ENCODE measurements at regions of chr16 and their contacts with region 1.

Region 1: GRCh38 chr16:56702836-56703235 is 20.6 kb downstream of the MT1X start:
- DNase-seq: no peak
- H3K4me3 Mint-ChIP-seq: no peak overlapping the region
- H3K27ac Mint-ChIP-seq: no peak overlapping the region
- H3K4me1 Mint-ChIP-seq: peaks cover 11% of the 10 kb centered on the region
- H3K27me3 Mint-ChIP-seq: peaks cover 11% of the 10 kb centered on the region

Region 2: DNA sequence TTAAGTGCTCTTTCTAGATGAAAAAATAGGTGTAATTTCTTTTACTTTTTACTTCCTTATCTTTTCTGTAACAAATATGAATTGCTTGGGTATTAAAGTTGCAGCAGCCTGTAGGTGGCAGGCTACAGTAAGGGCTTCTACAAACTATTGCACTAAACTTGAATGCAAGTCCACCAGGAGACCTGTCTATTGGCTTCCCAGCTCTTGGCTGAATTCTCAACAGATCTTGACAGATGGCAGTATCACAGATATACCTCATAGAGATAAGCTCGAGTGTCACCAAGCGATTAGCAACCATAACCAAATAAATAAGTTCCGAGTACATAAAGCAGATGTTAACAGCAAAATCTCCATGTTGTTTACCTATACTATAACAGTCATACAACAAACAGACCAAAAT is 188.9 kb before region 1 on chr16:
- intact Hi-C with region 1: loop called (anchors 1 kb)
- DNase-seq: no peak
- H3K4me3 Mint-ChIP-seq: no peak overlapping the region
- H3K27ac Mint-ChIP-seq: no peak overlapping the region
- H3K4me1 Mint-ChIP-seq: no peaks in the 10 kb centered on the region
- H3K27me3 Mint-ChIP-seq: no peaks in the 10 kb centered on the region

Region 3: GRCh38 chr16:56600398-56600999 is 102.3 kb before region 1 on chr16:
- intact Hi-C with region 1: loop called (anchors 1 kb)
- DNase-seq: no peak
- H3K4me3 Mint-ChIP-seq: no peak overlapping the region
- H3K27ac Mint-ChIP-seq: no peak overlapping the region
- H3K4me1 Mint-ChIP-seq: peaks cover 4% of the 10 kb centered on the region
- H3K27me3 Mint-ChIP-seq: peaks cover 26% of the 10 kb centered on the region

Region 4: DNA sequence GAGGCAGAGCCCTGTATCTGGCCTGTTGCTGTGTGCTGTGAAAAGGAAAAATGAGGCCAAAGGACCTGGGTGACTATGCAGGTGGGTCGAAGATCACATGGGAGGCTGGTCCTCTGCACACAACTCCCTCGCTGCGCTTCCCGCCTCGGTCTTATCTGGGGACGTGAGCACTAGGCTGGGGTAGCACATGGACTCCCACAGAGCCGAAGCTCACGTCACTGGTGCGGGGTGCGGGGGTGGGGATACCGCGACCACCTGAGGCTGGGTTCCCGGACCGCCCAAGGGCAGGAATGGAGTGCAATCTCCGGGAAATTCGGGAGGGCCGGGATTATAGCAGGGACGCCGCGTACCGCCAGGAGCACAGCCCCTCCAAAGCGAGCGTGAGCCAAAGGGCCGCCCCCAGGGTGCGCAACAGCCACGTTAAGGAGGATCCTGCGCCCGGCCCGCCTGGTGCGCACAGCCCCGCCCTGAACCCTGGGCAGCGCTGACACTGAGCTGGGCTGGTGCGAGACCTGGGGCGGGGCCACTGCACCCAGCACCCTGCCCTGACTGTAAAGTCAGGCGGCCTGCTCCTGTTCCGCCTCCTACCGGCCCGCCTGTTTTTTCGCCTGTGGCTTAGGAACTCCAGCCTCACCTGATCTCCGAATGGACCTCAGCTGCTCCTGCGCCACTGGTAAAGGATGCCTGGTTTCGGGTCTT is 59.6 kb before region 1 on chr16:
- intact Hi-C with region 1: loop called (anchors 1 kb)
- DNase-seq: peak; percentile 75
- H3K4me3 Mint-ChIP-seq: peak overlapping the region; percentile 70
- H3K27ac Mint-ChIP-seq: no peak overlapping the region
- H3K4me1 Mint-ChIP-seq: peaks cover 25% of the 10 kb centered on the region
- H3K27me3 Mint-ChIP-seq: peaks cover 52% of the 10 kb centered on the region

Region 5: GRCh38 chr16:56673921-56674320 is 28.9 kb before region 1 on chr16:
- intact Hi-C with region 1: loop called (anchors 1 kb)
- DNase-seq: no peak
- H3K4me3 Mint-ChIP-seq: no peak overlapping the region
- H3K27ac Mint-ChIP-seq: no peak overlapping the region
- H3K4me1 Mint-ChIP-seq: peaks cover 38% of the 10 kb centered on the region
- H3K27me3 Mint-ChIP-seq: peaks cover 50% of the 10 kb centered on the region

Region 6: GRCh38 chr16:56729735-56730662 is 27.2 kb after region 1 on chr16 and contains the start of gene NUP93:
- intact Hi-C with region 1: loop called (anchors 1 kb)
- DNase-seq: peak; percentile 87
- H3K4me3 Mint-ChIP-seq: no peak within 1 kb of the TSS
- H3K27ac Mint-ChIP-seq: peak within 1 kb of the TSS; percentile 88
- H3K4me1 Mint-ChIP-seq: peaks cover 13% of the 10 kb centered on the region
- H3K27me3 Mint-ChIP-seq: peaks cover 2% of the 10 kb centered on the region
- total RNA-seq, gene NUP93: 150 and 152 TPM in 2 replicates

Measured in activated T-helper 1 cell treated with anti-CD3 and anti-CD28 coated beads, Interleukin-12 subunit alpha, Interleukin-12 subunit beta, Interleukin-2, Interleukin-4 antibody, amounts not matched to agents 30 ng/mL and 10 ng/mL and 1 ng/mL, durations not matched to agents 14 hours and 24 hours and 36 hours (primary cell).